MCF 10A (cell line): ENCODE measurements at regions of chr11 and their contacts with region 1.

Region 1: GRCh38 chr11:45917623-45918330 is at the start of gene PEX16:
- DNase-seq: peak; percentile 98
- H3K4me3 Mint-ChIP-seq: peak within 1 kb of the TSS; percentile 92
- H3K27ac Mint-ChIP-seq: peak within 1 kb of the TSS; percentile 95
- H3K4me1 Mint-ChIP-seq: no peaks in the 10 kb centered on the region
- H3K27me3 Mint-ChIP-seq: no peaks in the 10 kb centered on the region
- CTCF ChIP-seq: no peak
- total RNA-seq, gene PEX16: 28.1 and 30.2 TPM in 2 replicates

Region 2: DNA sequence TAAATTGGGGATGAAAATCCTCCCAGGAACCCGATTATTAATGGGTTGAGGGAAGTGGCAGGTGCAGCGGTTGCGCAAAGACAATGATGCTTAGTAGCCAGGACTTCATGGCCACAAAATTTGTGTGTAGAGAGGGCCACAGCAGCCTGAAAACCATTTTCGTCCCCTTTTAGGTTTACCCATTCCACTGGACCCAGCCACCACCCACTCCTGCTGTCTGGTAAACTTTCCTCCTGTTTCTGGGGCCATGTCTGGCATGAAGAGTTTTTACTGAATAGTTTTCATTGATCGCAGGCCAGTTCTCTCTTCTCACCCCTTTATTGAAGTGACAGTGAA is 562.1 kb before region 1 on chr11:
- CTCF ChIA-PET with region 1: no interaction called
- POLR2A ChIA-PET with region 1: no interaction called
- intact Hi-C with region 1: no loop called
- DNase-seq: no peak
- H3K4me3 Mint-ChIP-seq: no peak overlapping the region
- H3K27ac Mint-ChIP-seq: no peak overlapping the region
- H3K4me1 Mint-ChIP-seq: no peaks in the 10 kb centered on the region
- H3K27me3 Mint-ChIP-seq: peaks cover 76% of the 10 kb centered on the region
- CTCF ChIP-seq: no peak

Region 3: GRCh38 chr11:45906096-45906682 is 11.6 kb before region 1 on chr11:
- CTCF ChIA-PET with region 1: no interaction called
- POLR2A ChIA-PET with region 1: interaction called, 16 read pairs
- intact Hi-C with region 1: no loop called
- DNase-seq: no peak
- H3K4me3 Mint-ChIP-seq: no peak overlapping the region
- H3K27ac Mint-ChIP-seq: no peak overlapping the region
- H3K4me1 Mint-ChIP-seq: no peaks in the 10 kb centered on the region
- H3K27me3 Mint-ChIP-seq: no peaks in the 10 kb centered on the region
- CTCF ChIP-seq: no peak

Region 4: GRCh38 chr11:45930031-45930794 is 12.4 kb after region 1 on chr11:
- CTCF ChIA-PET with region 1: interaction called, 4 read pairs
- POLR2A ChIA-PET with region 1: interaction called, 23 read pairs
- intact Hi-C with region 1: no loop called
- DNase-seq: no peak
- H3K4me3 Mint-ChIP-seq: peak overlapping the region; percentile 8
- H3K27ac Mint-ChIP-seq: peak overlapping the region; percentile 88
- H3K4me1 Mint-ChIP-seq: peaks cover 23% of the 10 kb centered on the region
- H3K27me3 Mint-ChIP-seq: no peaks in the 10 kb centered on the region
- CTCF ChIP-seq: no peak